Breast epithelium (tissue), 4 donors: ENCODE measurements at regions of chr11 and their contacts with region 1.

Region 1: DNA sequence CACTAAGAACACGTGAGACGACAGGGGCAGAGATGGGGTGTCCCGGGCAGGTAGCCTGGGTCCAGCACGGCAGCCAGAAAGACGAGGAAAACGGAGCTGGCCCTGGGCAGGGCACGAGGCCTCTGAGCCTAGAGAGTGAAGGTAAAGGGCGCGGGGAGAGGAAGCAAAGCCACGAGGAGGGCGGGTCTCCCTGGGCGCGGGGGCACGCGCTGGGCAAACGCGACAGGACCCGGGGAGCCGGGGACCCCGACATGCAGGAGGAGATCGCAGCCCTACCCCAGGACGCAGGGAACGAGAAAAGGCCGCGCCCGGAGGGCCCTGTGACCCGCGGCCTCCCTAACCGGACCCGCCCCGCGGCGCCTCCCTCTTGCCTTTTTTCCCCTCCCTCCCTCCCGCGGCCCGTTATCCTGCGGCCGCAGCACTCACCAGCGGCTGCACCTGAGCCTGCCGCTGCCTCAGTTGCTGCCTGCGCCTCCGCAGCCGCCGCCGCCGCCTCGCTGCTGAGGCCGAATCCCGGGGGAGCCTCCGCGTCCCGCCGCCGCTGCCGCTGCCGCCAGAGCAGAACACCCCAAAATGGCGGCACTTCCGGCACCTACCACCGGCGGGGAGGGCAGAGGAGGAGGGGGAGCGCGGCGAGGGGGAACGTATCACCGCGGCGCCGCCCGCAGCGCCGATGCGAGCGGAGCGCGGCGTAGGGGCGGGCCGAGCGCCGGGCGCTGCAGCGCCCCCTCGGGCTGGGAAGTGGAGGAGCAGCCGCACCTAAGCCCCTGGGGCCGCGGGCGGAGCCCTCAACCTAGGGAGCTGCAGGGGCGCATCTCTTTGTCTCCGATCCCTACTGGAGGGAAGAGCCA is at the start of gene CELF1:
- DNase-seq: peak; percentile 85 to 90
- H3K4me3 ChIP-seq: peak within 1 kb of the TSS; percentile 84 to 98 (median 85)
- H3K27ac ChIP-seq: peak within 1 kb of the TSS; percentile 94
- H3K4me1 ChIP-seq: no peaks in the 10 kb centered on the region
- H3K27me3 ChIP-seq: no peaks in the 10 kb centered on the region
- CTCF ChIP-seq: peak in 2 of 3 donors; percentile 56 to 90
- POLR2A ChIP-seq: no peak
- total RNA-seq, gene CELF1: 94.1 to 117 (median 114) TPM

Region 2: GRCh38 chr11:47387911-47388678 is 164.7 kb before region 1 on chr11:
- intact Hi-C with region 1: no loop called
- DNase-seq: no peak
- H3K4me3 ChIP-seq: peak overlapping the region in 1 of 3 donors; percentile 11
- H3K27ac ChIP-seq: peak overlapping the region; percentile 68 to 77
- H3K4me1 ChIP-seq: no peaks in the 10 kb centered on the region
- H3K27me3 ChIP-seq: no peaks in the 10 kb centered on the region
- CTCF ChIP-seq: no peak
- POLR2A ChIP-seq: no peak

Region 3: GRCh38 chr11:47466701-47467250 is 86.0 kb before region 1 on chr11:
- intact Hi-C with region 1: no loop called
- DNase-seq: no peak
- H3K4me3 ChIP-seq: peak overlapping the region in 1 of 3 donors; percentile 39
- H3K27ac ChIP-seq: peak overlapping the region; percentile 77 to 89
- H3K4me1 ChIP-seq: peaks cover 0 to 14% of the 10 kb centered on the region in 2 donors
- H3K27me3 ChIP-seq: no peaks in the 10 kb centered on the region
- CTCF ChIP-seq: no peak
- POLR2A ChIP-seq: no peak

Region 4: GRCh38 chr11:47538741-47539574 is 13.8 kb before region 1 on chr11:
- intact Hi-C with region 1: loop called (anchors 1 kb)
- DNase-seq: no peak
- H3K4me3 ChIP-seq: no peak overlapping the region
- H3K27ac ChIP-seq: no peak overlapping the region
- H3K4me1 ChIP-seq: peaks cover 3 to 7% of the 10 kb centered on the region in 2 donors
- H3K27me3 ChIP-seq: no peaks in the 10 kb centered on the region
- CTCF ChIP-seq: no peak
- POLR2A ChIP-seq: no peak